Heart left ventricle (tissue), 16 donors: ENCODE measurements at regions of chr7 and their contacts with region 1.

Region 1: DNA sequence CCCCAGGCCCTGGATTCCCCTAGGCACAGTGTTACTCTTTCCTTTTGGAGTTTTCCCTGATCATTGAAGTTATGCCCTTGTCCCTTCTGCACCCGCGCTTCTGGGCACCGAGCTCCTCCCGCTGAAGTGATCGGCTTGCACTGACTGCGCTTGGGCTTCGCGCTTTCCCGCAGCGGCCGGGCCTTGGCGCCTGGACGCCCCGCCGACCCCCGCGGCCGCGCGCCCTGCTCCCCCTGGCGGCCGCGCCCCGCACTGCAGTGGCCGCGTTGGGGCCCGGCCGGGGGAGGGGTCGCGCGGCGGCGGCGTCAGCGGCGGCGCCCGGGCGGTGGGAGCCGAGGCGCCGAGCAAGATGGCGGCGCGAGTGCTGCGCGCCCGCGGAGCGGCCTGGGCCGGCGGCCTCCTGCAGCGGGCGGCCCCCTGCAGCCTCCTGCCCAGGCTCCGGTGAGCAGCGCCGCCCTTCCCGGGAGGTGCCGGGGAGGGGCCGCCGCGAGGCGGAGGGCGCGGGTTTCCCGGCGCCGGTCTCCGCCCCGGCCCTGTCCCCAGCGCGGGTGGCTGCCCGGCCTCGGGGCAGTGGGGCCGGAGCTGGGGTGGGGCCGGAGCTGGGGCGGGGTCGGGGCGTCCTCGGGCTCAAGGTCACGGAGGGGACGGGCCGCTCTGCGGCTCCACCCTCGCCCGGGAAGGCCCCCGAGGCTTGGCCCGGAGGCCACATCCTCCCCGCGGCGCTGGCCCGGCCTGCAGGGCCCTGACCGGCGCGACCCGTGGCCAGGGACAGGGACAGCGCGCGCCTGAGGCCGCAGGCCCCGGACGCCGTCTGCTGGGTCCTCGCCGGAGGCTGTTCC is at the start of gene NIPSNAP2:
- DNase-seq: peak; percentile 90 to 95 (median 91)
- ATAC-seq: peak; percentile 87 to 97 (median 94)
- H3K4me3 ChIP-seq: peak within 1 kb of the TSS; percentile 45 to 84 (median 69)
- H3K27ac ChIP-seq: peak within 1 kb of the TSS; percentile 86 to 99 (median 96)
- H3K4me1 ChIP-seq: peaks cover 0 to 48% (median 17%) of the 10 kb centered on the region in 12 donors
- H3K27me3 ChIP-seq: no peaks in the 10 kb centered on the region
- CTCF ChIP-seq: peak; percentile 12 to 70 (median 50)
- POLR2A ChIP-seq: peak in 1 of 2 donors; percentile 86
- total RNA-seq, gene NIPSNAP2: 184 to 529 (median 329) TPM

Region 2: GRCh38 chr7:55572378-55573233 is 391.9 kb before region 1 on chr7 and contains the start of gene VOPP1:
- intact Hi-C with region 1: loop called in 2 of 10 experiments (anchors 10 kb)
- DNase-seq: peak; percentile 69 to 87 (median 77)
- ATAC-seq: peak; percentile 74 to 90 (median 87)
- H3K4me3 ChIP-seq: peak within 1 kb of the TSS; percentile 80 to 99 (median 97)
- H3K27ac ChIP-seq: peak within 1 kb of the TSS; percentile 64 to 96 (median 90)
- H3K4me1 ChIP-seq: peaks cover 6 to 61% (median 47%) of the 10 kb centered on the region in 12 donors
- H3K27me3 ChIP-seq: no peaks in the 10 kb centered on the region
- CTCF ChIP-seq: no peak
- POLR2A ChIP-seq: peak in 1 of 2 donors; percentile 13
- total RNA-seq, gene VOPP1: 20.3 to 58.0 (median 26.8) TPM

Region 3: GRCh38 chr7:55838595-55838994 is 125.9 kb before region 1 on chr7:
- intact Hi-C with region 1: no loop called
- DNase-seq: no peak
- ATAC-seq: no peak
- H3K4me3 ChIP-seq: no peak overlapping the region
- H3K27ac ChIP-seq: no peak overlapping the region
- H3K4me1 ChIP-seq: no peaks in the 10 kb centered on the region
- H3K27me3 ChIP-seq: no peaks in the 10 kb centered on the region
- CTCF ChIP-seq: no peak
- POLR2A ChIP-seq: no peak

Region 4: GRCh38 chr7:55887821-55888247 is 76.6 kb before region 1 on chr7:
- intact Hi-C with region 1: loop called in 6 of 10 experiments (anchors 1 to 10 kb)
- DNase-seq: no peak
- ATAC-seq: no peak
- H3K4me3 ChIP-seq: peak overlapping the region in 11 of 12 donors; percentile 27 to 74 (median 59)
- H3K27ac ChIP-seq: peak overlapping the region in 11 of 12 donors; percentile 41 to 77 (median 64)
- H3K4me1 ChIP-seq: peaks cover 0 to 9% (median 2%) of the 10 kb centered on the region in 12 donors
- H3K27me3 ChIP-seq: no peaks in the 10 kb centered on the region
- CTCF ChIP-seq: no peak
- POLR2A ChIP-seq: no peak

Region 5: DNA sequence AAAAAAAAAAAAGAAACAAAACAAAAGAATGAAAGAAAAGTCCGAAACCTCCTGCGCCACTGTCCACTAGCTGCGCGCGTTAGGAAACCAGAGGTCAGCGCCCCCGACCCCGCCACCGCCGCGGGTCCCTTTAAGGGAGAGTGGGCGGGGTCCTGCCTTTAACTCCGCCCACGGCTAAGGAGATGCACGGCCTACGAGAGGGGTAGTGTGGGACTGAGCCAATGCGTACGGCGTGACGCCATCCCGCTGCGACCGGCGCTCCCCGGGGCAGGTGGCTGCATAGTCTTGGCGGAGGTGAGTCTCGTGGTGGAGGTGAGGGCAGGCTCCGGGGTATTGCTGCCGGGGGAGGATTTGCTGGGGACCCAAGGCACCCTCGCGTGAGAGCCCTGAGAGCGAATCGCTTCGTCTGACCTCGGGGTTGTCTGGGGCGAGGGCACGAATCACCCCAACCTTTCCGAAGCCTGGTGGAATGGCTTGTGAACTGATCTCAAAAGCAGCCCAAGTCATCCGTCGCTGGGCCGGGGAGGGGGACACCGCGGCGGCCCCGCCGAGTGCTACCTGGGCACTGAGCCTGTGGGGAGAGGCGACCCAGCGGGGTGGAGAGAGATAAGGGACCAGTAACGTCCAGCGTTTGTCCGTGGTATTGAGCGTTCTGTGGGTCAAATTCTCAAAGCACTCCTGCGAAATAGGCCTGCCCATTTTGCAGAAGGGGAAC is 12.7 kb before region 1 on chr7 and contains the start of gene MRPS17:
- intact Hi-C with region 1: loop called in 1 of 10 experiments (anchors 1 kb)
- DNase-seq: peak; percentile 88 to 94 (median 91)
- ATAC-seq: peak; percentile 100
- H3K4me3 ChIP-seq: peak within 1 kb of the TSS; percentile 73 to 95 (median 82)
- H3K27ac ChIP-seq: peak within 1 kb of the TSS in 11 of 12 donors; percentile 50 to 89 (median 78)
- H3K4me1 ChIP-seq: peaks cover 0 to 11% (median 8%) of the 10 kb centered on the region in 12 donors
- H3K27me3 ChIP-seq: no peaks in the 10 kb centered on the region
- CTCF ChIP-seq: no peak
- POLR2A ChIP-seq: peak in 1 of 2 donors; percentile 65
- total RNA-seq, gene MRPS17: 14.8 to 24.2 (median 19.0) TPM

Region 6: GRCh38 chr7:56063882-56064625 is 99.6 kb after region 1 on chr7 and contains the start of gene SUMF2:
- intact Hi-C with region 1: loop called in 1 of 10 experiments (anchors 5 kb)
- DNase-seq: peak; percentile 93 to 97 (median 95)
- ATAC-seq: peak; percentile 99 to 100 (median 100)
- H3K4me3 ChIP-seq: peak within 1 kb of the TSS; percentile 52 to 94 (median 76)
- H3K27ac ChIP-seq: peak within 1 kb of the TSS; percentile 54 to 93 (median 90)
- H3K4me1 ChIP-seq: peaks cover 0 to 32% (median 11%) of the 10 kb centered on the region in 12 donors
- H3K27me3 ChIP-seq: no peaks in the 10 kb centered on the region
- CTCF ChIP-seq: peak in 10 of 12 donors; percentile 5 to 50 (median 31)
- POLR2A ChIP-seq: peak in 1 of 2 donors; percentile 83
- total RNA-seq, gene SUMF2: 23.1 to 61.5 (median 30.9) TPM

Region 7: GRCh38 chr7:56092789-56093531 is 128.5 kb after region 1 on chr7 and contains the start of gene PHKG1:
- intact Hi-C with region 1: loop called in 1 of 10 experiments (anchors 5 kb)
- DNase-seq: peak; percentile 86 to 90 (median 89)
- ATAC-seq: peak; percentile 81 to 93 (median 90)
- H3K4me3 ChIP-seq: peak within 1 kb of the TSS in 11 of 12 donors; percentile 25 to 56 (median 43)
- H3K27ac ChIP-seq: peak within 1 kb of the TSS; percentile 57 to 94 (median 85)
- H3K4me1 ChIP-seq: peaks cover 0 to 38% (median 18%) of the 10 kb centered on the region in 12 donors
- H3K27me3 ChIP-seq: no peaks in the 10 kb centered on the region
- CTCF ChIP-seq: peak; percentile 47 to 83 (median 72)
- POLR2A ChIP-seq: no peak
- total RNA-seq, gene PHKG1: 5.9 to 150 (median 19.9) TPM